ENCODE measurements at regions of chr2 and their contacts with region 1.

Region 1: GRCh38 chr2:138501425-138502283 is at the start of gene SPOPL:
- DNase-seq: peak; percentile 69 to 93
- H3K4me3 ChIP-seq: peak within 1 kb of the TSS; percentile 61
- H3K27ac ChIP-seq: peak within 1 kb of the TSS; percentile 62
- H3K4me1 ChIP-seq: peaks cover 33% of the 10 kb centered on the region
- H3K27me3 ChIP-seq: no peaks in the 10 kb centered on the region
- CTCF ChIP-seq: 0 out of 2 replicates have a peak, but pooled peaks have one; percentile 11
- total RNA-seq, gene SPOPL: 20.6 and 21.0 TPM in 2 replicates

Region 2: GRCh38 chr2:137023205-137023604 is 1478.4 kb before region 1 on chr2:
- CTCF ChIA-PET with region 1: no interaction called
- POLR2A ChIA-PET with region 1: interaction called, 18 read pairs
- intact Hi-C with region 1: no loop called
- DNase-seq: no peak
- H3K4me3 ChIP-seq: no peak overlapping the region
- H3K27ac ChIP-seq: no peak overlapping the region
- H3K4me1 ChIP-seq: no peaks in the 10 kb centered on the region
- H3K27me3 ChIP-seq: peaks cover 10% of the 10 kb centered on the region; the same call in 1 of the 2 replicates
- CTCF ChIP-seq: no peak

Region 3: DNA sequence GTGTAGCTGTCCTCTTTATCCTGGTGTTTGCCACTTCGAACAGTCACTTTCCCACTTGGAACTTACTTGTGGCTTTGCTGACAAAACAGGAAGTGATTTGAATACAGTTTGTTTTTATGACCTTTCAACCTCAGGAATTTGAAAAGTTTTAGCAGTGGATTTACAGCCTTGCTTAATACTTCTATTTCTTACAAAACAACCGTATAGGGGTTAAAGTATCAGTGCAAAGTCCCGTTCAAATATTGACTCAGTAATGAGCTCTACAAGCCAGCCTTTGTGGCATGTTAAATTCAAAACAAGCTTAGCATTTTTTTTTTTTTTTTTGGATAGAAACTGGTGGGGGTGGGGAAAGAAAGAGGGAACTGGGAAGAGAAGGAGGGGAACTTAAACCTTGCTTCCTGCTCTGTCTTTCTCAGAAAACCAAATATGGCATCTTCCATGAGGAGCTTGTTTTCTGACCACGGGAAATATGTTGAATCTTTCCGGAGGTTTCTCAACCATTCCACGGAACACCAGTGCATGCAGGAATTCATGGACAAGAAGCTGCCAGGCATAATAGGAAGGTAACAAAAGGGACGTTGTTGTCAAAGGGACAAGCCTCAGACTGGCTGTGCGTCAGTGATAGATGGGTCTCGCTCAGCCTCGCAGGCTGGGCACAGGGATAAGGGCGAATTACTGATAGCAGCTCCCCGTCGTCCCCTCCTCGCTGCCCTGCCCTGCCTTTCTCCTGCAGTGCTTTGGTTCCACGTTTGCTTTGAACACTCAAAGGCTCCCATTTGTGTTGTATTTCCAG is 537.4 kb before region 1 on chr2 and contains the start of gene HNMT:
- CTCF ChIA-PET with region 1: no interaction called
- POLR2A ChIA-PET with region 1: interaction called, 3 read pairs
- intact Hi-C with region 1: loop called (anchors 5 kb)
- DNase-seq: peak; percentile 41 to 95
- H3K4me3 ChIP-seq: peak within 1 kb of the TSS; percentile 59
- H3K27ac ChIP-seq: peak within 1 kb of the TSS; percentile 85
- H3K4me1 ChIP-seq: peaks cover 45% of the 10 kb centered on the region
- H3K27me3 ChIP-seq: no peaks in the 10 kb centered on the region
- CTCF ChIP-seq: no peak
- total RNA-seq, gene HNMT: 16.6 TPM in 2 replicates

Region 4: GRCh38 chr2:138364554-138365162 is 137.0 kb before region 1 on chr2:
- CTCF ChIA-PET with region 1: no interaction called
- POLR2A ChIA-PET with region 1: no interaction called
- intact Hi-C with region 1: no loop called
- DNase-seq: no peak
- H3K4me3 ChIP-seq: no peak overlapping the region
- H3K27ac ChIP-seq: no peak overlapping the region
- H3K4me1 ChIP-seq: peaks cover 7% of the 10 kb centered on the region
- H3K27me3 ChIP-seq: no peaks in the 10 kb centered on the region
- CTCF ChIP-seq: no peak

Region 5: GRCh38 chr2:138421315-138422301 is 80.0 kb before region 1 on chr2:
- CTCF ChIA-PET with region 1: no interaction called
- POLR2A ChIA-PET with region 1: interaction called, 22 read pairs
- intact Hi-C with region 1: loop called (anchors 5 kb)
- DNase-seq: peak; percentile 27 to 80
- H3K4me3 ChIP-seq: no peak overlapping the region
- H3K27ac ChIP-seq: peak overlapping the region; percentile 73
- H3K4me1 ChIP-seq: peaks cover 11% of the 10 kb centered on the region
- H3K27me3 ChIP-seq: no peaks in the 10 kb centered on the region
- CTCF ChIP-seq: no peak

Region 6: DNA sequence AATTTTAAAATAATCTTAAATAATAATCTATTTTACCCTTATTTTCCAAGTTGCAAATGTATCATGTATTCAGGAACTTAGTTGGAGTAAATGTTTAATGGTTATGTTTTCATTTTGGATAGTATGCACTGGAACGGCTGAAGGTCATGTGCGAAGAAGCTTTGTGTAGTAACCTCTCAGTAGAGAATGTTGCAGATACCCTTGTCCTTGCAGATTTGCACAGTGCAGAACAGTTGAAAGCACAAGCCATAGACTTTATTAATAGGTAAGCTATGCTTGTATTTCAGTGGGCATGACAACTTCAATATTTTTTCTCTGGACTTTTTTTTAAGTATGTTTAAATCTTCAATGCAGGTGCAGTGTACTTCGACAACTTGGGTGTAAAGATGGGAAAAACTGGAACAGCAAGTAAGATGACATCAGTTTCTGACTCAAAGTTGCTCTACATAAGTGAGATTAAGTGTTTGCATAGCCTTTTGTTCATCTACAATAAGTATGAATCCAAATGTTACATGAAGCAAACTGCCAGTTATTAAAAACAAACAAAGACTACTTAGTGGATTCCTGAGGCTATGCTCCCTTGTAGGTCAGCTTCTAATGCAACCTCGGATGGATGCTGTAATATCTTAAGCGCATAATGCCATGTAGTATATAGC is 63.1 kb after region 1 on chr2:
- CTCF ChIA-PET with region 1: no interaction called
- POLR2A ChIA-PET with region 1: no interaction called
- intact Hi-C with region 1: no loop called
- DNase-seq: peak in 1 of 2 experiments; percentile 52
- H3K4me3 ChIP-seq: no peak overlapping the region
- H3K27ac ChIP-seq: no peak overlapping the region
- H3K4me1 ChIP-seq: no peaks in the 10 kb centered on the region
- H3K27me3 ChIP-seq: no peaks in the 10 kb centered on the region
- CTCF ChIP-seq: no peak

Region 7: GRCh38 chr2:138658187-138658894 is 156.7 kb after region 1 on chr2:
- CTCF ChIA-PET with region 1: no interaction called
- POLR2A ChIA-PET with region 1: interaction called, 10 read pairs
- intact Hi-C with region 1: no loop called
- DNase-seq: no peak
- H3K4me3 ChIP-seq: no peak overlapping the region
- H3K27ac ChIP-seq: no peak overlapping the region
- H3K4me1 ChIP-seq: no peaks in the 10 kb centered on the region
- H3K27me3 ChIP-seq: no peaks in the 10 kb centered on the region
- CTCF ChIP-seq: no peak

Region 8: GRCh38 chr2:138752197-138752956 is 250.7 kb after region 1 on chr2:
- CTCF ChIA-PET with region 1: no interaction called
- POLR2A ChIA-PET with region 1: no interaction called
- intact Hi-C with region 1: loop called (anchors 5 kb)
- DNase-seq: peak in 1 of 2 experiments; percentile 53
- H3K4me3 ChIP-seq: no peak overlapping the region
- H3K27ac ChIP-seq: no peak overlapping the region
- H3K4me1 ChIP-seq: no peaks in the 10 kb centered on the region
- H3K27me3 ChIP-seq: no peaks in the 10 kb centered on the region
- CTCF ChIP-seq: no peak

Region 9: GRCh38 chr2:138787053-138787666 is 285.5 kb after region 1 on chr2:
- CTCF ChIA-PET with region 1: no interaction called
- POLR2A ChIA-PET with region 1: no interaction called
- intact Hi-C with region 1: loop called (anchors 10 kb)
- DNase-seq: peak in 1 of 2 experiments; percentile 14
- H3K4me3 ChIP-seq: no peak overlapping the region
- H3K27ac ChIP-seq: no peak overlapping the region
- H3K4me1 ChIP-seq: no peaks in the 10 kb centered on the region
- H3K27me3 ChIP-seq: no peaks in the 10 kb centered on the region
- CTCF ChIP-seq: peak; percentile 82

Measured in PC-9 (cell line).